ENCODE measurements at regions of chr4 and their contacts with region 1.

Region 1: DNA sequence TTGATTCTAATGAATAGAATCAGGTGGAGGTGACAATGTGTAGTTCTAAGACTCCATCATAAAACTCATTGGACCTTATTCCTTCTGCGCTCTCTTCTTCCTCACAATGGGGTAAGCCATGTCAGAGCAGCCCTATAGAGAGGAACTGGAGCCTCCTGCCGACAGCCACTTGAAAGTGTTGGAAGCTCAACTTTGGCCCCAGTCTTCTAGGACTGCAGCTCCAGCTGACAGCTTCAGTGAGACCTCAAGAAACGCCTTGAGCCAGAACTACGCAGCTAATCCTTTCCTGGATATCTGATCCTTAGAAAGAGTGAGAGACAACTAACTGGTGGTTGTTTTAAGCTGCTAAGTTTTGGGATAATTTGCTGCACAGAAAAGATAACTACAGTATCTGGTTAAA is 22.1 kb upstream of the ADH7 start:
- DNase-seq: no peak
- H3K4me3 ChIP-seq: no peak overlapping the region
- CTCF ChIP-seq: peak; percentile 2

Region 2: DNA sequence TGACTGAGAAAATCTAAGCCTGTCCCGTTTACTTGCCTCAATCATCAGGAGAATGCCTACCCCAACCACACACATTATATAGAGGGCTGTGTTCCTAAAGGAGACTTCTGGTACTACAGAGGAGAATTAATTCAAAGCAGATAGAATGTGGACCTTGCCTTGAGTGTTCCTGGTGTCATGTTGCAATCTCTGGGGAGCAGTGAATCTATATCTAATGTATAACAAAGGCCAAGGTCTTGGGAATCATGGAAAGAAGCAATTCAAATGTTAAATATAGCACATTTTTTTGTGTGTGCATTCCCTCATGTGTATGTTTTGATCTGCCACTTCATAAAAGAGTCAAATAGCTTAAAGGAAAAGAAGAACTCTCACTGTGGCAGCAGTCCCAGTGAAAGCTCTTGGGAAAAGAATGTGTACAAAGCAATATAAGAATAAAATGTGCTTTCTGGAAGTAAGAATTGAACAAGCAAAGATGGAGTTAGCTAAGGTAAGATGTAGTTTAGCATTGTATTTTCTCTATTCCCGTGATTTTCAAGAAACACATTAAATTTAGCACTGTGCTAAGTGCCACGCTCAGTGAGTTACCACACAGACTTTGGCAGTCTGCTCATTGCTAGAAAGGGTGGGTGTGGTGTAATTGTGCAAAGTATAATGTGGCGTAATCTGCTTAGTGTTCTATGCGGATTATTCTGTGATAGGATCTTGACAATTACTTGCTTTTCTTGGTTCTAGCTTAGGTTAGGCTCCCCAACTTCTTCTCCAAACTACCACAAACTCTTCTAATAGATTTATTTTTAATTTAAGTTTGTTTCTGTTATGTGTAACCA is 251.9 kb before region 1 on chr4:
- CTCF ChIA-PET with region 1: interaction called, 16 read pairs
- POLR2A ChIA-PET with region 1: no interaction called
- DNase-seq: no peak
- H3K4me3 ChIP-seq: no peak overlapping the region
- CTCF ChIP-seq: no peak